B cell (primary cell): ENCODE measurements at regions of chr16 and their contacts with region 1.

Region 1: DNA sequence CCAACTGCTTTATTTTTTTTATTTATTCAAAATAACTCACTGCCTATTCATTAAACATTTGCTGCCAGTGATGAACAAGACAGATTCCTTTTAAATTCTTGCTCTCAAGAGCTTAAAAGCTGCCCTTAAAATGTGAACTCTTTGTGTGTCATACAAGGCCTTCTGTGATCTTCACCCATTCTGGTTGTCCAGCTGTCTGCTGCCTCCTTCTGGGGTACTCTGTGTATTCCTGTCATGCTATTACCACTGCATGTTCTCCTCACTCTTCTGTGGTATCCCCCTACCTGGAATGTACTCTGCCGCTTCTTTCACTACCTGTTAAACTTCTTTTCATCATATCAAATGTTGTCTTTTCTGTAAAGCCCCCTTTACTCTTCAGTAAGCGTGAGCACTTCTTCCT is 165.8 kb downstream of the CHD9 start:
- DNase-seq: peak; percentile 50
- ATAC-seq: peak; percentile 60
- H3K4me3 ChIP-seq: no peak overlapping the region
- H3K4me3 Mint-ChIP-seq: no peak overlapping the region
- H3K27ac ChIP-seq: peak overlapping the region; percentile 31 to 78
- H3K27ac Mint-ChIP-seq: no peak overlapping the region
- H3K4me1 ChIP-seq: peaks cover 33 to 35% of the 10 kb centered on the region in 2 donors
- H3K4me1 Mint-ChIP-seq: peaks cover 12% of the 10 kb centered on the region
- H3K27me3 ChIP-seq: no peaks in the 10 kb centered on the region
- H3K27me3 Mint-ChIP-seq: no peaks in the 10 kb centered on the region
- CTCF ChIP-seq: peak; percentile 48

Region 2: DNA sequence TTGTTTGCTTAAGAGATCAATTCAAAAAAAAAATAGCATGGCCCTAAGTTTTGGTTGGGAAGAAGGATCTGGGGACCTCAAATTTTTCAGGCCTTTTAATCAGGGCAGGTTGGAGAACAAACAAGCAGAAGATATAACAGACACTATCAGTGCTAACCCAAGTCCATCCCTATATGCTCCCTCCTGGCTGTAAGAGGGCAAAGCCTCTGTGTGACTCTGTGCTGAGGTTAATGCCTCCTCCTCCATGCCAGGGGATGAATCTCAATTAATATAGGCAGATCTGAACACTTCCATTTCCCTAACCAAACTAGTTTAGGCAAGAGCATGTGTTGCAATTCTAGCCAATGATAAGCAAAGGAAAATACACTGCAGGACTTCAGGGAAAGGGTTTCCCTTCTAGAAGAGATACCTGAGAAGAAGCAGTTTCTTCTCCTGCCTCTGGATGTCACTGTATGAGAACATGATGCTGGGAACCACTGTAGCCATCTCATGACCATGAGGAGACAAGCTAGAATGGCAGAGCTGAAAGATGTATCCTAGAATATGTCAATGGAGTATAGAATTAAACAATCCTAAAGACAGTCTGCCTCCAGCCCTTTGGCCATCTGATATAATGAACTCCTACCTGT is 243.9 kb before region 1 on chr16:
- CTCF ChIA-PET with region 1: interaction called, 4 read pairs
- POLR2A ChIA-PET with region 1: no interaction called
- intact Hi-C with region 1: loop called (anchors 5 kb)
- DNase-seq: peak; percentile 37
- ATAC-seq: no peak
- H3K4me3 ChIP-seq: no peak overlapping the region
- H3K4me3 Mint-ChIP-seq: no peak overlapping the region
- H3K27ac ChIP-seq: no peak overlapping the region
- H3K27ac Mint-ChIP-seq: no peak overlapping the region
- H3K4me1 ChIP-seq: no peaks in the 10 kb centered on the region
- H3K4me1 Mint-ChIP-seq: no peaks in the 10 kb centered on the region
- H3K27me3 ChIP-seq: peaks cover 0 to 2% (median 0%) of the 10 kb centered on the region in 4 experiments
- H3K27me3 Mint-ChIP-seq: peaks cover 27% of the 10 kb centered on the region
- CTCF ChIP-seq: no peak

Region 3: GRCh38 chr16:53183442-53183841 is 37.1 kb before region 1 on chr16:
- CTCF ChIA-PET with region 1: no interaction called
- POLR2A ChIA-PET with region 1: no interaction called
- intact Hi-C with region 1: no loop called
- DNase-seq: no peak
- ATAC-seq: no peak
- H3K4me3 ChIP-seq: no peak overlapping the region
- H3K4me3 Mint-ChIP-seq: no peak overlapping the region
- H3K27ac ChIP-seq: no peak overlapping the region
- H3K27ac Mint-ChIP-seq: no peak overlapping the region
- H3K4me1 ChIP-seq: peaks cover 0 to 3% of the 10 kb centered on the region in 2 donors
- H3K4me1 Mint-ChIP-seq: peaks cover 11% of the 10 kb centered on the region
- H3K27me3 ChIP-seq: no peaks in the 10 kb centered on the region
- H3K27me3 Mint-ChIP-seq: no peaks in the 10 kb centered on the region
- CTCF ChIP-seq: no peak